Naive thymus-derived CD8-positive, alpha-beta T cell (primary cell): ENCODE measurements at regions of chr3 and their contacts with region 1.

Region 1: DNA sequence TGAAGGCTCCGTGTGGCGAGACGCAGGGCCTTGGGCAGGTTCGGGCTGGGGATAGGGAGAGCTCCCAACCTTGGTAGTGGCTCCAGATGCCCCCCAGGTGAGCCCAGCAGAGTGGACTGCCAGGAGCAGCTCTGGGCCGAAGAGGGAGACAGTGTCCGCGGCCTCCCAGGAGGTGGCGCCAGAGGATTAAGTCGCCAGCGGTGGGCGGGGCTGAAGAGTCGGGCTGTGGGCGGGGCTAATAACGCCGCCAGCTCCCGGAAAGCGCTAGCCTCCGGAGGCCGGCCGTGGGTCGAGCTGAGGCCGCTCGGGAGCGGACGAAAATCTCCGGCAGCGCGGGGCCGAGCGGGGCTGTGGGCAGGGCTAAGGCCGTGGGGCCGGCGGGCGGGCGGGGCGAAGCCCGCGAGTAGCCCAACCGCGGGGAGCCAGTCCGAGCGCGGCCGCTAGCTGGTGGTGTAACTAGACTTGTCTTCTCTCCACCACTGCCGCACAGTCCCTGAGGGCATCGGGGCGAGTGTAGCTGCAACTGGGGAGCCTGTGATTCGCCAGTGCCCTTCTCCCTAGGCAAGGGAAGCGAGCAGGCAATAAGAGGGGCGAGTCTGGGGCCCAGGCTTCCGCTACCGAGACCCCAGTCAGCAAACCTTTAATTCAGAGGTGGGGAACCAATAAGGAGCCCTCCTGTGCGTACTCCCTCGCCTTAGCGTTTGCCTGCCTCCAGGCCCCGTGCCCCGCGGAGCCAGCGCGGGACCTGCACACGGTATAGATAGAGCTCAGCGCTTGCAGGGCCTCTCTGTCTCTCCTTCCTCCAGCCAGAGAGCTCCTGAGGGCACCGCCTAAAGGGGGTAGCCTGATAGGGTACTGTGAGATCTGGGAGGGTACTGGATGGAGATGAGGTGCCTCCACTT is 14.4 kb upstream of the BSN start:
- DNase-seq: peak; percentile 78 to 95 (median 90)
- ATAC-seq: peak; percentile 89 to 92
- H3K4me3 Mint-ChIP-seq: peak overlapping the region; percentile 76 to 89 (median 81)
- H3K27ac Mint-ChIP-seq: peak overlapping the region; percentile 35 to 91 (median 54)
- H3K4me1 Mint-ChIP-seq: peaks cover 0 to 8% (median 5%) of the 10 kb centered on the region in 4 donors
- H3K27me3 Mint-ChIP-seq: peaks cover 2 to 9% (median 6%) of the 10 kb centered on the region in 5 donors

Region 2: GRCh38 chr3:49445381-49445780 is 94.5 kb before region 1 on chr3:
- POLR2A ChIA-PET with region 1: no interaction called
- DNase-seq: no peak
- ATAC-seq: no peak
- H3K4me3 Mint-ChIP-seq: peak overlapping the region in 1 of 10 donors; percentile 19
- H3K27ac Mint-ChIP-seq: peak overlapping the region in 7 of 10 donors; percentile 34 to 81 (median 46)
- H3K4me1 Mint-ChIP-seq: peaks cover 3 to 28% (median 16%) of the 10 kb centered on the region in 4 donors
- H3K27me3 Mint-ChIP-seq: no peaks in the 10 kb centered on the region

Region 3: GRCh38 chr3:49519916-49520385 is 20.0 kb before region 1 on chr3:
- POLR2A ChIA-PET with region 1: no interaction called
- DNase-seq: no peak
- ATAC-seq: no peak
- H3K4me3 Mint-ChIP-seq: no peak overlapping the region
- H3K27ac Mint-ChIP-seq: peak overlapping the region in 2 of 10 donors; percentile 19 to 37
- H3K4me1 Mint-ChIP-seq: peaks cover 19 to 31% (median 22%) of the 10 kb centered on the region in 4 donors
- H3K27me3 Mint-ChIP-seq: no peaks in the 10 kb centered on the region

Region 4: GRCh38 chr3:49673715-49674496 is 134.0 kb after region 1 on chr3 and contains the start of gene APEH:
- POLR2A ChIA-PET with region 1: interaction called, 24 read pairs
- DNase-seq: peak; percentile 94 to 99 (median 97)
- ATAC-seq: peak; percentile 83 to 85
- H3K4me3 Mint-ChIP-seq: peak within 1 kb of the TSS; percentile 91 to 98 (median 96)
- H3K27ac Mint-ChIP-seq: peak within 1 kb of the TSS; percentile 92 to 99 (median 98)
- H3K4me1 Mint-ChIP-seq: peaks cover 17 to 51% (median 43%) of the 10 kb centered on the region in 4 donors
- H3K27me3 Mint-ChIP-seq: no peaks in the 10 kb centered on the region
- polyA plus RNA-seq, gene APEH: 105 to 131 (median 114) TPM

Region 5: GRCh38 chr3:50235716-50236496 is 696.0 kb after region 1 on chr3 and contains the start of gene GNAI2:
- POLR2A ChIA-PET with region 1: interaction called, 10 read pairs
- DNase-seq: peak; percentile 93 to 100 (median 99)
- ATAC-seq: peak; percentile 88 to 91
- H3K4me3 Mint-ChIP-seq: peak within 1 kb of the TSS; percentile 94 to 99 (median 98)
- H3K27ac Mint-ChIP-seq: peak within 1 kb of the TSS; percentile 93 to 98 (median 96)
- H3K4me1 Mint-ChIP-seq: peaks cover 21 to 56% (median 45%) of the 10 kb centered on the region in 4 donors
- H3K27me3 Mint-ChIP-seq: no peaks in the 10 kb centered on the region
- polyA plus RNA-seq, gene GNAI2: 405 to 534 (median 417) TPM